Activated CD4-positive, alpha-beta T cell treated with anti-CD3 and anti-CD28 coated beads, Interleukin-2, amount 10 ng/mL, durations not matched to agents 24 days and 14 days (primary cell): ENCODE measurements at regions of chr9 and their contacts with region 1.

Region 1: DNA sequence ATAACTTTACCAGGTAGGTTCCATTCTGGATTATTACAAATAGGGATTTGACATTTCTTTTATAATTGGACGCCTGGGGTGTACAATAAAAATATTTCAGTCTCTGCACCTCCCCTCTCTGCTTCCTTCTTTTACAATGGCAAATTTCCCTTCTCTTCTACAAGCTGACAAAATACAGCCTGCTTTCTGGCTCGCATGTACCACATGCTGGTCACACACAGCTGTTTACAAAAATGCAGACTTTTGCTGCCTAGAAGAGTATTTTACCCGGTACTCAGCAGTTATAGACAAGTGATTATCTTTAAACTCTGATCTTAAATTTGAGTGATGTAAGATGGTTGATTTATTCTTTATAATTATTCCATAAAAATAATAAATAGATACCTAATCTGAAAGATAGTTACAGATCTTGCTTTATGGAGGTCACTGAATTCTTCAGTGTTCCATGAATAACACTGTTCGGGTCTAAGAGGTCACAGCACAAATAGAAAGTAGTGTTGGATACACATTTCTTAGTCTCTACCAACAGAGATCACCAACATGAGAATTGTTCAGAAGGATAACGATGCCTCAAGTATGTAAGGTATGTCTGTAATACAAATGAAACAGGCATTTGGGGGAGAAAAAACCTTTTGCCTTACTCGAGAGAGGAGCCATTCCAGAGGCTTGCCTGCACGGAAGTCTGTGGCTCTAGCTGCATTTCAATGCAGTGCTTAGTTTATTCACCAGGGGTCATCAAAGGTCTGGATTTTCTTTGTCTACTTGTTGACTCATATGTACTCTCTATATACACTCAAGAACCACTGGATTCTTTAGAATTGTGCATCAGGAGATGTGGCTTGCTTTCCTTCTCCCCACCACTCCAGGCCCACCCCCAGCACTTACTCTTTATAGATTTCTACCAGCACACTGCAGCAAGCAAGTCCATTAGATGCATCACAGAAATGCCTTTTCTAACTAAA is 206.6 kb upstream of the RFX3 start:
- DNase-seq: peak; percentile 87
- H3K4me3 Mint-ChIP-seq: no peak overlapping the region
- H3K27ac Mint-ChIP-seq: no peak overlapping the region
- H3K4me1 Mint-ChIP-seq: peaks cover 11% of the 10 kb centered on the region
- H3K27me3 Mint-ChIP-seq: no peaks in the 10 kb centered on the region

Region 2: DNA sequence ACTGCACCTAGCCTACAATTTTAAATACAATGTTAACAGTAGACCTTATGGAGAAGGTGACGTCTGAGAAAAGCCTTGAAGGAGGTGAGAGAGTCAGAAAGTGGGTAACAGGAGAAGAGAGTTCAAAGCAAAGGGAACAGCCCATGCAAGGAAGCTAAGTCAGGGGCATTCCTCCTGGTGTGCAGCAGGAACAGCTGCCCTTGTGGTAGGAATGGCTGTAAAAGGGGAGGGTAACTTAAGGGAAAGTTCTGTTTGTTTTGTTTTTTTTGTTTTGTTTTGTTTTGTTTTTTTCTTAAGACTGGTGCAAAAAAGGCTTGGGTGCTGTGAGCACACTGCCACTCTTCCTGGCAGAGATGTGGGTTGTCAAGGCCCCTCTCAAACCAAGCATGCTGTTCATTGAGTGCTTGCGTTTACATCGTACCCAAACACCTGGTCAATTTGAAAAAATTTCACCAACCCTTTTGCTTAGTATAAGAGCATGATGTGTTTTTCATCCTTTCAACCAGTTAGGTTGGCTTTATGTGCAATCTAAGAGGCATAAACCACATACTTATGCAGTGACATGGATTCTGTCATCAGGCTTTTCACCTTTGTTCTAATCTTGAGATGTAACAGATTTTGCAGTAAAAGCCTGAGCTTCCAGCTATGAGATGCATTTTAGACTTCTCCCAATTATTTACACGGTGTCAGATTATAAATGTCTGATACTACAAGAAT is 287.8 kb after region 1 on chr9:
- intact Hi-C with region 1: loop called (anchors 10 kb)
- DNase-seq: no peak
- H3K4me3 Mint-ChIP-seq: no peak overlapping the region
- H3K27ac Mint-ChIP-seq: no peak overlapping the region
- H3K4me1 Mint-ChIP-seq: peaks cover 3% of the 10 kb centered on the region
- H3K27me3 Mint-ChIP-seq: peaks cover 8% of the 10 kb centered on the region

Region 3: DNA sequence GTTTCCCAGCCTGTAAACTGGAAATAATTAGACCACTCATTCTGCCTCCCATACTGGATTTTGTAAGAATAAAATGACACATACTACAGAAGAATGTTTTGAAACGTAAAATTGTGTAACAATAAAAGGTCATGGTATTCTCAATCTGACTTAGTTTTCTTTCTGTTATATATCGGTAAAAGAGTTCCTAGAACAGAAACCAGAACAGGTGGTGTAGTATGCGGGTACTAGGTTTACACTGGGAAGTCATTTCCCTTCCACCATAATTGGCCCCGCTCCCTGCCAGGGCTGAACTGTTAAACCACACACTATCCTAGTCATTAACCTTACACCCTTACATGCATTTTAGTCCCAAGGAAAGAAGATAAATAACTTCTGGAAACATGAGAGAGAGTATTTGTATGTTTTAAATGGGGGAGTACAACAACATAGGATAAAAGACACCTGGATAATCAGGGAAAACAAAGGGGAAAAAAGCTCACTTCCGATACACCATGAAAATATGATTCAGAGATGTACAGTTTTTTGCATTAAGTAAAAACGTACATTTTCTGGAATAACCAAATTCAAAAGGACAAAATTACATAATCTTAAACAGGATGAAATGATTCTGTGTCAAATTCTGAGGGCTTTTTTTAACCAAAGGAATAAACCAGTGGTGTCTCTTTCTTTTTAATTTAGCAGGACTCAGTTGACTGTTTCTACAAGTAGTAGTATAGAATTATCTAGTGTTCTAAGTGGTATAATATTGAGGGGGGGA is 367.8 kb after region 1 on chr9:
- intact Hi-C with region 1: no loop called
- DNase-seq: no peak
- H3K4me3 Mint-ChIP-seq: no peak overlapping the region
- H3K27ac Mint-ChIP-seq: no peak overlapping the region
- H3K4me1 Mint-ChIP-seq: peaks cover 6% of the 10 kb centered on the region
- H3K27me3 Mint-ChIP-seq: no peaks in the 10 kb centered on the region

Region 4: GRCh38 chr9:4228606-4229005 is 496.2 kb after region 1 on chr9:
- intact Hi-C with region 1: loop called (anchors 1 kb)
- DNase-seq: no peak
- H3K4me3 Mint-ChIP-seq: no peak overlapping the region
- H3K27ac Mint-ChIP-seq: no peak overlapping the region
- H3K4me1 Mint-ChIP-seq: peaks cover 3% of the 10 kb centered on the region
- H3K27me3 Mint-ChIP-seq: peaks cover 2% of the 10 kb centered on the region

Region 5: DNA sequence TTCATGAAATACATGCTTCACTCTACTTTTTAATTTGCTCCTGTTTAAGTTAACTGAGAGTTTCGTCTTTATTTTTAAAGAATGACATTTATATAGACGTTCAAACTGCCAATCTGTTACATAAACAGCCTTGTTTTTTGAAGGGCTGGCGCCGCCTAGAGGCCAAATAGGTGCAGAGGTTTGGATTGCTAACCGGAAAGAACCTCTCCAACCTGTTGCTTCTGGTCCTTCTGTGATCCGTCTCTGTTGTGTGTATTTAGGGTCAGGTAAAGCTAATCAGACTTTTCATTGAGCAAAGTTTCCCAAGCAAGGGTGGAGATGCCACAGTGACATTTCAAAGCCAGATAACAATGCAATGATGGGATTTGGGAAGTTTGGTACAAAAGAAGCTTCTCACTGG is 607.0 kb after region 1 on chr9:
- intact Hi-C with region 1: loop called (anchors 1 kb)
- DNase-seq: peak; percentile 93
- H3K4me3 Mint-ChIP-seq: peak overlapping the region; percentile 46
- H3K27ac Mint-ChIP-seq: peak overlapping the region; percentile 56
- H3K4me1 Mint-ChIP-seq: peaks cover 5% of the 10 kb centered on the region
- H3K27me3 Mint-ChIP-seq: no peaks in the 10 kb centered on the region